OCI-LY7 (cell line): ENCODE measurements at regions of chr5 and their contacts with region 1.

Region 1: GRCh38 chr5:36644727-36645126 is 38.3 kb downstream of the SLC1A3 start:
- DNase-seq: no peak
- H3K4me3 ChIP-seq: no peak overlapping the region
- H3K27ac ChIP-seq: no peak overlapping the region
- H3K4me1 ChIP-seq: no peaks in the 10 kb centered on the region
- CTCF ChIP-seq: no peak

Region 2: GRCh38 chr5:36728697-36729543 is 84.2 kb after region 1 on chr5:
- CTCF ChIA-PET with region 1: no interaction called
- POLR2A ChIA-PET with region 1: interaction called, 12 read pairs
- intact Hi-C with region 1: no loop called
- DNase-seq: peak; percentile 73
- H3K4me3 ChIP-seq: no peak overlapping the region
- H3K27ac ChIP-seq: no peak overlapping the region
- H3K4me1 ChIP-seq: peaks cover 16% of the 10 kb centered on the region
- CTCF ChIP-seq: peak; percentile 90